HAP-1 (cell line): ENCODE measurements at regions of chr12 and their contacts with region 1.

Region 1: GRCh38 chr12:93742110-93742934 is 65.1 kb downstream of the CRADD start:
- DNase-seq: peak in 1 of 2 experiments; percentile 90
- H3K4me3 ChIP-seq: peak overlapping the region; percentile 43
- H3K4me1 ChIP-seq: peaks cover 52% of the 10 kb centered on the region
- H3K27me3 ChIP-seq: no peaks in the 10 kb centered on the region

Region 2: DNA sequence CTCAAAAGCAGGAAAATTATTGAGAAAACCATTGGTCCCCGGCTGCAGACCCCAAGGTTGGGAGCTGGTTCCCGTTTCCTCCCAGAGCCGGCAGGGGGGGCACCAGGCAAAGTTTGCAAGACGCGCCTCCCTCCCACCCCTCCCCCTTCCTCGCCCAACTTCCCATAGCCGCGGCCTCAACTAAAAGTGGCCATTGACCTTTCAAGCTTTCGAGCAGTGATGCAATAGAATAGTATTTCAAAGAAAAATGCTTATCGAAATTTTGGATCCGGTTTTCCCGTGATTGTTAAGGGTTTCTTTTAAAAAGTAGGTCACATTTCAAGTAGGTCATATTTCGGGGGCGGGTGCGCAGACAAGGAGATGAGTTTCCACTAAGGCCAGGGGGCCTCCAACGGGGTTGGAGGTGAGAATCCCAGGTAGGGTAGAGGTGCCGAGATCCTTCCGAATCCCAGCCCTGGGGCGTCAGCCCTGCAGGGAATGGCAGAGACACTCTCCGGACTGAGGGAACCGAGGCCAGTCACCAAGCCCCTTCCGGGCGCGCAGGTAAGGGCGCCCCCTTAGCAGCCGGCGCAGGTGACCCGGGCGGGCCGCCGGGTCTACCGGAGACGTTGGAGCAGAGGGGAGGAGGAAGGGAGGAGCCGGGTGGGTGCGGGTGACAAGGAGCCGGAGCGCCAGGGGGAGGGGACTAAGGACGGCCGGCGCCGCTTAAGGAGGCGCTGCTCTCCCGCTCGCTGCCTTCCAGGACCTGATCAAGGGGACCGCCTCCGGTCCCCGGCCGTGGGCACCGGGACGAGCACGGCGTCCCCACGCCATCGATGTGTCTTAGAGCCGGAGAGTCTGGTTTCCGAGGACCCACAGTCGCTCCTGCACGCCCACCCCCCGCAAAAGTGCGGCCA is 172.4 kb before region 1 on chr12:
- in situ Hi-C with region 1: loop called (anchors 5 kb)
- DNase-seq: peak; percentile 87 to 96
- H3K4me3 ChIP-seq: peak overlapping the region; percentile 89
- H3K4me1 ChIP-seq: peaks cover 6% of the 10 kb centered on the region
- H3K27me3 ChIP-seq: no peaks in the 10 kb centered on the region